Caco-2 (cell line): ENCODE measurements at regions of chr1 and their contacts with region 1.

Region 1: DNA sequence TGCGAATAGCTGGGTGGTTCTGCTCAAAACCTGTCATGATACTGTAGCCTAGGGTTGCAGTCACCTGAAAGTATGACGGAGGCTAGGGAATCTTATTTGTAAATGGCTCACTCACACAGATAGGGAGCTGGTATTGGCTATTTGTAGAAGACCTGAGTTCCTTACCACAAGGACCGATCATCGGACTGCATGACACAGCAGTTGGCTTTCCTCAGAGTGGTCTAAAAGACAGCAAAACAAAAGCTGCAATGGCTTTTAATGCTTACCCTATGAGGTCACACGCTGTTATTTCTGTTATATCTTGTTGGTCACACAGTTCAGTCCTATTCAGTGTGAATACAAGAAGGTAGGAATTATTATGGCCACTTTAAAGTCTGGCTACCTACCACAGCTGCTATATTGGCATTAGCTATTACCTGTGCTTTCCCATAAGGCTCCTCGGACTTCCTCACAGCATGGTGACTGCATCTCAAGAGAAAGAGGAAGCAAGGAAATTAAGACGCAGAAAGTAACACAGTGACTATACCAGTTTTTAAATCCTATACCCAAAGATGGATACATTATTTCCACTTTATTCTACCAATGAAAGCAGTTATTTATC is 68.4 kb upstream of the LRRC7 start:
- DNase-seq: no peak
- H3K4me3 ChIP-seq: no peak overlapping the region
- H3K4me3 Mint-ChIP-seq: no peak overlapping the region
- H3K27ac Mint-ChIP-seq: no peak overlapping the region
- H3K4me1 ChIP-seq: peaks cover 37% of the 10 kb centered on the region
- H3K4me1 Mint-ChIP-seq: peaks cover 13% of the 10 kb centered on the region
- H3K27me3 ChIP-seq: no peaks in the 10 kb centered on the region
- H3K27me3 Mint-ChIP-seq: no peaks in the 10 kb centered on the region
- CTCF ChIP-seq: no peak

Region 2: GRCh38 chr1:69409731-69410456 is 89.4 kb before region 1 on chr1:
- CTCF ChIA-PET with region 1: no interaction called
- POLR2A ChIA-PET with region 1: no interaction called
- intact Hi-C with region 1: loop called (anchors 1 kb)
- DNase-seq: no peak
- H3K4me3 ChIP-seq: no peak overlapping the region
- H3K4me3 Mint-ChIP-seq: no peak overlapping the region
- H3K27ac Mint-ChIP-seq: no peak overlapping the region
- H3K4me1 ChIP-seq: peaks cover 31% of the 10 kb centered on the region
- H3K4me1 Mint-ChIP-seq: peaks cover under 1% of the 10 kb centered on the region
- H3K27me3 ChIP-seq: no peaks in the 10 kb centered on the region
- H3K27me3 Mint-ChIP-seq: no peaks in the 10 kb centered on the region
- CTCF ChIP-seq: no peak

Region 3: GRCh38 chr1:69426401-69426800 is 72.9 kb before region 1 on chr1:
- CTCF ChIA-PET with region 1: no interaction called
- POLR2A ChIA-PET with region 1: no interaction called
- intact Hi-C with region 1: loop called (anchors 2 kb)
- DNase-seq: no peak
- H3K4me3 ChIP-seq: no peak overlapping the region
- H3K4me3 Mint-ChIP-seq: no peak overlapping the region
- H3K27ac Mint-ChIP-seq: no peak overlapping the region
- H3K4me1 ChIP-seq: peaks cover 55% of the 10 kb centered on the region
- H3K4me1 Mint-ChIP-seq: peaks cover 13% of the 10 kb centered on the region
- H3K27me3 ChIP-seq: no peaks in the 10 kb centered on the region
- H3K27me3 Mint-ChIP-seq: no peaks in the 10 kb centered on the region
- CTCF ChIP-seq: no peak

Region 4: DNA sequence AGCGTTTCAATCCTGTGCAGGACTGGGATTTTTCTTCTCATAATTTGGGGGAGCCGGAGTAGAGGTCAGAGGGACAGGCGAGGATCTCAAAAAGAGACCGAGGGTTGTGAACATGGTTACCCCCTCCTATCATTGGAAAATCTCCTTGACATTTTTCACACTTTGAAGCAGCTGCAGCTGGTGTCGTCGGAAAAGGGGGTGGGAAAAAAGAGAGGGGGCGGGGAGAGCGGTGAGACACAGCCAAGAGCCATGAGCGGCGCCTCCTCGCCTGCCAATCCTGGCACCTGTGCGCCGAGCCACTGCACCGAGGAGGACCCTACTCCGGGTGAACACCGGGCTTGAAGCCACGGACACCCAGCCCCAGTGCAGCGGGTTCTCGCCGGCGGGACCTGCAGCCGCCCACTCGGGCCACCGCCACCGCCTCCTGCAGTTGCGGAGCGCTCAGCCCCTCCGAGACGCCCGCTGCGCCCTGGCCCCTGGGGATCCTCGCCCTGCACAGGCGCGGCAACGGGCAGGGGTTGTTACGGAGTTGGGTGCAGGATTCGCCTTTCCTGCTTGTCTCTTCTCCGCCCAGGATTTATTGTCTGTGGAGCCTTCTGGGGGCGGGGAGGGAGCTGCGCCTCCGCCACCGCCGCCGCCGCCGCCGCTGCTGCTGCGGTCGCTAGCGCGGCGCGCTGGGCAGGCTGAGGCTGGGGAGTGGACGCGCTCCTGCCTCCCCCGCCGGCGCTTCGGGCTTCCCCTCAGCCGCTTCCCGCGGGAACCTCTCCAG is 68.5 kb after region 1 on chr1 and contains the start of gene LRRC7:
- CTCF ChIA-PET with region 1: no interaction called
- POLR2A ChIA-PET with region 1: no interaction called
- intact Hi-C with region 1: loop called (anchors 5 kb)
- DNase-seq: peak; percentile 32 to 42
- H3K4me3 ChIP-seq: peak within 1 kb of the TSS; percentile 48
- H3K4me3 Mint-ChIP-seq: peak within 1 kb of the TSS; percentile 97
- H3K27ac Mint-ChIP-seq: peak within 1 kb of the TSS; percentile 89
- H3K4me1 ChIP-seq: 0 out of 2 replicates have a peak, but pooled peaks cover 3% of the 10 kb centered on the region
- H3K4me1 Mint-ChIP-seq: no peaks in the 10 kb centered on the region
- H3K27me3 ChIP-seq: no peaks in the 10 kb centered on the region
- H3K27me3 Mint-ChIP-seq: no peaks in the 10 kb centered on the region
- CTCF ChIP-seq: no peak
- total RNA-seq, gene LRRC7: 8.5 and 10.6 TPM in 2 replicates